Activated CD4-positive, alpha-beta memory T cell treated with anti-CD3 and anti-CD28 coated beads, Interleukin-2, amount 10 ng/mL, durations not matched to agents 7 days and 5 days (primary cell): ENCODE measurements at regions of chr6 and their contacts with region 1.

Region 1: GRCh38 chr6:166381733-166382499 is 824 bp downstream of the MPC1 start:
- DNase-seq: peak; percentile 80
- H3K4me3 Mint-ChIP-seq: peak overlapping the region; percentile 91
- H3K27ac Mint-ChIP-seq: peak overlapping the region; percentile 80
- H3K4me1 Mint-ChIP-seq: peaks cover 19% of the 10 kb centered on the region
- H3K27me3 Mint-ChIP-seq: no peaks in the 10 kb centered on the region

Region 2: DNA sequence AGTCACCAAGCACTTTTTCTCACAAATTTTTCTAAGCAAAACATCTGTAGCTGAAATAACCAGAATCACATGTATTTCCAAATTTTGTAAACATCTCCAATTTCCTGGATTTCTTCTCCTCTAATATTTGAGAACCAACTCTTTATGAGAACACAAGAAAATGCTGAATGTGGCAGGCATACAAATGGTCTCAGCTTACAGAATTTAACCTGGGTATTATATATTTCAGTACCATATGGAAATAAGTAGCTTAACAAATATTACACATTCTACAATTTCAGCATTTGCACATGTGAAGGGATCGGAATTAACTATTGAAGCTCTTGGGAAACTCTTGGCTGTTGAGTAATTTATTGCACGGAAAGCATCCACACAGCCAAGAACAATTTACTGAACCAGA is 306.7 kb before region 1 on chr6:
- CTCF ChIA-PET with region 1: no interaction called
- POLR2A ChIA-PET with region 1: no interaction called
- DNase-seq: no peak
- H3K4me3 Mint-ChIP-seq: no peak overlapping the region
- H3K27ac Mint-ChIP-seq: no peak overlapping the region
- H3K4me1 Mint-ChIP-seq: no peaks in the 10 kb centered on the region
- H3K27me3 Mint-ChIP-seq: peaks cover 1% of the 10 kb centered on the region

Region 3: DNA sequence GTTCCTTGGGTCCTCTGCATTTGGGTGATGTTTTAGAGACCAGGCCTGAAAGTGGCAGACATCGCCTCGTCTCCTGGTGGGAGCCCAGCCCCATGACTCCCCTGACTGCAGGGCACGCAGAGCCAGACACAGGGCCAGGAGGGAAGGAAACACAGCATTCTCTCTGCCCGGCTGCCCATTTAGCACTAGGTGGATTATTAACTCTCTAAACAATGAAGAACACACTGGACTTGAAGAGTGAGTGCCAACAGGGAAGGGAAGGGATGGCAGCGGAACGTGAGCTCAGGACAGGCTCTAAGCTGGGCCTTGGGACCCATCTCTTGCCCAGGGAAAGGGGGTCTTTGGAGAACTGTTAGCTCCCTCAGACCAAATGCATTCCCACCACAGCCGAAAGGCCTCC is 294.7 kb before region 1 on chr6:
- CTCF ChIA-PET with region 1: no interaction called
- POLR2A ChIA-PET with region 1: no interaction called
- DNase-seq: no peak
- H3K4me3 Mint-ChIP-seq: no peak overlapping the region
- H3K27ac Mint-ChIP-seq: no peak overlapping the region
- H3K4me1 Mint-ChIP-seq: no peaks in the 10 kb centered on the region
- H3K27me3 Mint-ChIP-seq: no peaks in the 10 kb centered on the region

Region 4: DNA sequence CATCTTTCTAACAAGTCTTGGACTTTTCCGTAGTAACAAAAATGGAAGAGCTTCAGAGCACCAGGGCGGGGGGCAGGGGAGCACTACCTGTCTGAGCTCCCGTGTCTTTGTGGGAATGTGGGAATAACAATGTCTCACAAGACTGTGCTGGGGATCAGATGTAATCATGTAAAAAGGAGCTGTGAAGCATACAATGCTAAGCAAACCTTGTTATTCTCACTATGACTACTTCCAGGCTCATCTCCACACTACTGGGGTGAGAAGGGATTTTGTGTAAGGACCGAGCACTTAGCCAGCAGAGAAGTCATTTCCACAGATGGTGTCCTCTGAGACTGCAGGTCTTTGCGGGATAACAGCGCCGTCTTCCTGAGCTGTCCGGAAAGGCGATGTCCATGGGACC is 100.8 kb before region 1 on chr6:
- CTCF ChIA-PET with region 1: interaction called, 31 read pairs
- POLR2A ChIA-PET with region 1: no interaction called
- DNase-seq: no peak
- H3K4me3 Mint-ChIP-seq: no peak overlapping the region
- H3K27ac Mint-ChIP-seq: no peak overlapping the region
- H3K4me1 Mint-ChIP-seq: no peaks in the 10 kb centered on the region
- H3K27me3 Mint-ChIP-seq: peaks cover 17% of the 10 kb centered on the region

Region 5: DNA sequence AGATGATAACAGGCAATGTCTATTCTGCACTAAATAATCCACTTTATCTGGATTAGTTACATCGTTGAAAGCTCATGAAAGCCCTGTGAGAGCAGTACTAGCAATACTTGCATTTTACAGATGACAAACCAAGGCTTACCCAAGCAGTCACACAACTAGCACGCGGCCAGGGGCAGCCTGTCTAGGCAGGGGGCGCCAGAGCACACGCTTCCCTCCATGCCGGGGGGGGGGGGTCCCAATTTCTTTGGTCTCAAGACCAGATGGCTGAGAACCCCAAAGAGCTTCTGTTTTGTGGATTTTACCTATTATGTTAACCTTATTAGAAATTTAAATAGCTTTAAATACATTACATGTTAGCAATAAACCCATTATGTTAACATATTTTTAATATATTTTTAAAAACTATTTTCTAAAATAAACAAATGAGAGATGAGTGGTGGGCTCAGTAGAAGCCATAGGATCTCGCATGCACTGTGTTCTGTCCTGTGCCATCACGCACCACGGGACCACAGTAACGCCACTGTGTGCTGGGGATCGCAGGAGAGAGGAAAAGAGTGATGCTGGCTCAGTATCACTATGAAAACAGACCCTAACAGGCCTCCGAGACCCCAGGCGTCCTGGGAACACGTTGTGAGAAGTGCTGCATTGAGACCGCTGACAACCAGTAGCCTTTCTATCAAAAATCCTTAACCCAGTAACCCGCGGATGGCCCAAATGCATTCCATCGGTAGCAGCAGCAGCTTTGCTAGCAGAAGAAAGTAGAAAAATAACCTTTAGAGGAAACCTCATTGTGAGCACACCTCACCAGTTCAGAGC is 68.5 kb before region 1 on chr6:
- CTCF ChIA-PET with region 1: interaction called, 38 read pairs
- POLR2A ChIA-PET with region 1: interaction called, 6 read pairs
- DNase-seq: peak; percentile 58
- H3K4me3 Mint-ChIP-seq: no peak overlapping the region
- H3K27ac Mint-ChIP-seq: no peak overlapping the region
- H3K4me1 Mint-ChIP-seq: peaks cover 3% of the 10 kb centered on the region
- H3K27me3 Mint-ChIP-seq: peaks cover 21% of the 10 kb centered on the region

Region 6: DNA sequence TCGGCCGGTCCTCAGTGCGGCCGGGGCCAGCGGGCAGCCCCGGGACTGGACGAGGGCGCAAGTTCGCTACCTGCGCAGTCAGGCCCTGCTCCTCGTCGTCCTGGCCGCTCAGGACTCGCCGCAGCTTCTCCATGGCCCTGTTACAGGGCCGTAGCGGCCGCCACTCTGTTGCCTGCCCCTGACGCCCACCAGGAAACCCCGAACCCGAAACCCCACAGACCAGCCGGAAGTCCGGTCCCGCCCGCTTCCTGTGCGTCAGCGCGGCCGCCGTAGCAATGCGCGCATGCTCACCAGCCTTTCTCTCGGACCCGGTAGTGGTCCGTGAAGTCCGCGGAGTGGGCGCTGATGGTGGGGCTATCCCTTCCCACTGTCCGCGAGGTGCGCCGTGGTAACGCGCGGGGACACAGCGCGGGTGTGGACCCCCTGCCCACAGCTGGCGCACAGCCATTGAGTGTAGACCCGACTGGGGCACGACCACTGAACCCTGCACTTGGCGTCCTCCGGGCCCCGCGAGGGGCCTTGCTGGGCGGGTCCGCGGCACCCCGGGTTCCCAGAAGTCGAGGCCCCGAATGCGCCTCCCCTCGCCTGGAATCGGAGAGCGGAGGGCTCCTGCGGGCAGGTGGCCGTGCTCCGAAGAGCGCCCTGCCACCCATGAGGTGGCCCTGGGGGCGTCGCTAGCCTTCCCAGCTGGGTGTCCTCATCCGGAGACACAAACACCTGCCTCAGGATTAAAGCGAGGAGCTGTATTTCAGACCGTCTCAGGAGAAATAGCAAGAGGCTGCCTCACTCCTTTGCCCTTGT is 39.4 kb before region 1 on chr6 and contains the start of gene SFT2D1:
- CTCF ChIA-PET with region 1: interaction called, 21 read pairs
- POLR2A ChIA-PET with region 1: interaction called, 8 read pairs
- DNase-seq: peak; percentile 88
- H3K4me3 Mint-ChIP-seq: peak within 1 kb of the TSS; percentile 86
- H3K27ac Mint-ChIP-seq: peak within 1 kb of the TSS; percentile 81
- H3K4me1 Mint-ChIP-seq: peaks cover 14% of the 10 kb centered on the region
- H3K27me3 Mint-ChIP-seq: peaks cover 14% of the 10 kb centered on the region
- total RNA-seq, gene SFT2D1: 70.0 to 72.0 TPM

Region 7: GRCh38 chr6:166365806-166366205 is 16.1 kb before region 1 on chr6:
- CTCF ChIA-PET with region 1: interaction called, 13 read pairs
- POLR2A ChIA-PET with region 1: no interaction called
- DNase-seq: no peak
- H3K4me3 Mint-ChIP-seq: no peak overlapping the region
- H3K27ac Mint-ChIP-seq: no peak overlapping the region
- H3K4me1 Mint-ChIP-seq: peaks cover 2% of the 10 kb centered on the region
- H3K27me3 Mint-ChIP-seq: no peaks in the 10 kb centered on the region

Region 8: DNA sequence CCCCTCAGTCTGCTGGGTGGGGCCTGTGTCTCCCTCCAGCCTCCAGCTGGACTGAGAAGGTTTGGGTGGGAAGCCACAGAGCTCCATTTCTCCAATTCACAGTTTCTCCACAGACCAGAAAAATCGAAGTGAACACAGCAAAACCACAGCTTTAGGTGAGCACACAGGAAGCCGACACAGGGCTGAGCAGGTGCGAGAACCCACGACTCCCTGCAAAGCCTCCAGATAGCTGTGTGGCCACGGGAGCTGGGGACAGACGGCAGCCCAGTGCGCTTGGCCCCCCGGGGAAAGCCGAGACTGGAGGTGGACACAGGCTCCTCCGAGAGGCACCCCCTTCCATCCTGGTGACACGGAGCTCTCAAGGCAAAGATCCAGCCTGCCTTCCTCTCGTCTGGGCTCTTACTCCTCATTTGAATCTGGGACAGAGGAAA is 29.8 kb after region 1 on chr6:
- CTCF ChIA-PET with region 1: interaction called, 10 read pairs
- POLR2A ChIA-PET with region 1: interaction called, 3 read pairs
- DNase-seq: peak; percentile 50
- H3K4me3 Mint-ChIP-seq: peak overlapping the region; percentile 26
- H3K27ac Mint-ChIP-seq: peak overlapping the region; percentile 44
- H3K4me1 Mint-ChIP-seq: peaks cover 57% of the 10 kb centered on the region
- H3K27me3 Mint-ChIP-seq: peaks cover 19% of the 10 kb centered on the region